Endothelial cell of umbilical vein (primary cell): ENCODE measurements at regions of chr4 and their contacts with region 1.

Region 1: GRCh38 chr4:169079942-169080827 is 70.1 kb upstream of the CBR4 start:
- DNase-seq: peak; percentile 87
- H3K4me3 ChIP-seq: peak overlapping the region in 1 of 3 experiments; percentile 0
- H3K27ac ChIP-seq: peak overlapping the region; percentile 66
- H3K4me1 ChIP-seq: peaks cover 20% of the 10 kb centered on the region
- H3K27me3 ChIP-seq: no peaks in the 10 kb centered on the region
- CTCF ChIP-seq: no peak
- POLR2A ChIP-seq: no peak

Region 2: DNA sequence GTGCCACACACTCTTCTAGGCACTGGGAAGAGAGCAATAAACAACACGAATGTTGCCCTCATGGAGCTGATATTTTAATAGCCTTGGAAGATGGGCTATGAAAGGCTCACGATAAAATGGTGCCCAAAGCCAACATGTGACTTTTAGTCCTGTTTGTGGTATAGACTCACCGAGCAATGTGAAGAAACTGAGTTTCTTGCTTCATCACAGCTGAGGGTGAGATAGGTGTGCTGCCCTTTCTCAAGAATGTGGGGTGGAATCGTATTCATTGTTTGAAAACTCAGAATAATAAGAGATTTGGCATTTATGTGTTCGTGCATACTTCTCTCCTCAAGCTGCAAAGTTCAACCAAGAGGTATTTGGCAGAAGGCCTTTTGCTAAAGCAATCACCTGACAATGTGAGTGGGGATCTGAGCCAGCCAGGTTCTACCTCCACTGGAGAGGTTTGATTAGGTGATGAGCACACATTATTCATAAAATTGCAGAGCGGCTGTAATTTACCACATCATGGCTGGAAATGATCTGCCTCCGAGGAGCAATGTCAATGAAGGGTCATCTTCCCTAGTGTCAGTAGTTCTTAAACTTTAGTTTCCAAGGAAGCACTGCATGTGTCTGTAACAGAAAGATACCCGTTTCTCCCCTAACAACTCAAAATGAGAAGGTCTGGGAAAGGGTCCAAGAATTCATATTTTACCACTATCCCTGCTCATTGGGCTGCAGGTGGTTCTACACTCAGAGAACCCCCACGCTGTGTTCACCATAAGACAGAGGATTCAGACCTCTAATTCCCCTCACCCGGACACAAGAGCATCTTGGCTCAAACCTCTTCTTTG is 28.2 kb before region 1 on chr4:
- CTCF ChIA-PET with region 1: interaction called, 5 read pairs
- POLR2A ChIA-PET with region 1: no interaction called
- dilution Hi-C with region 1: no loop called
- intact Hi-C with region 1: loop called (anchors 2 kb)
- DNase-seq: no peak
- H3K4me3 ChIP-seq: no peak overlapping the region
- H3K27ac ChIP-seq: no peak overlapping the region
- H3K4me1 ChIP-seq: peaks cover 17% of the 10 kb centered on the region
- H3K27me3 ChIP-seq: no peaks in the 10 kb centered on the region
- CTCF ChIP-seq: no peak
- POLR2A ChIP-seq: no peak

Region 3: GRCh38 chr4:169059306-169060211 is 20.6 kb before region 1 on chr4:
- CTCF ChIA-PET with region 1: no interaction called
- POLR2A ChIA-PET with region 1: no interaction called
- dilution Hi-C with region 1: no loop called
- intact Hi-C with region 1: loop called (anchors 1 kb)
- DNase-seq: peak; percentile 79
- H3K4me3 ChIP-seq: no peak overlapping the region
- H3K27ac ChIP-seq: peak overlapping the region; percentile 72
- H3K4me1 ChIP-seq: peaks cover 16% of the 10 kb centered on the region
- H3K27me3 ChIP-seq: no peaks in the 10 kb centered on the region
- CTCF ChIP-seq: no peak
- POLR2A ChIP-seq: peak; percentile 69

Region 4: GRCh38 chr4:169099771-169100180 is 19.6 kb after region 1 on chr4:
- CTCF ChIA-PET with region 1: interaction called, 11 read pairs
- POLR2A ChIA-PET with region 1: no interaction called
- dilution Hi-C with region 1: no loop called
- intact Hi-C with region 1: loop called (anchors 2 kb)
- DNase-seq: peak; percentile 42
- H3K4me3 ChIP-seq: no peak overlapping the region
- H3K27ac ChIP-seq: peak overlapping the region; percentile 30
- H3K4me1 ChIP-seq: peaks cover 36% of the 10 kb centered on the region
- H3K27me3 ChIP-seq: no peaks in the 10 kb centered on the region
- CTCF ChIP-seq: no peak
- POLR2A ChIP-seq: no peak

Region 5: DNA sequence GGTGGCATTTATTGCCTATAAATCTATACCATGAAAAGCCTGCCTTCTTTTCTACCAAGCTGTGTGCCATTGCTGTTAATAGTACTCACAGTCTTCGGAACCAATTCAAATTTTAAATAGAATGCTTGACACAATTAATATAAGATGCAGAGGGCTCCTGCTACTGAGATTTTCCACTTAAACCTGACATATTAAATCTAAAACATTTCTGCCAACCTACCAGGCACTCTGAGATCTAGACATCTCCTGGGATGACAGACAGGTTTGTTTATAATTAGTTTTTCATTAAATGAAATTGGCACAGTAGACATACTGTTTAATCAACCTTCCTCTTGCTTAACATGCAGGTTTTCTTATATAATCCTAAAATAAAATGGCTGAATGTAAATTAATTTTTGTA is 47.1 kb after region 1 on chr4:
- CTCF ChIA-PET with region 1: no interaction called
- POLR2A ChIA-PET with region 1: no interaction called
- dilution Hi-C with region 1: no loop called
- intact Hi-C with region 1: no loop called
- DNase-seq: no peak
- H3K4me3 ChIP-seq: no peak overlapping the region
- H3K27ac ChIP-seq: no peak overlapping the region
- H3K4me1 ChIP-seq: no peaks in the 10 kb centered on the region
- H3K27me3 ChIP-seq: no peaks in the 10 kb centered on the region
- CTCF ChIP-seq: no peak
- POLR2A ChIP-seq: no peak